ENCODE measurements at regions of chr1 and their contacts with region 1.

Region 1: GRCh38 chr1:46547481-46548383 is 3.7 kb downstream of the KNCN start:
- DNase-seq: peak in 2 of 5 donors; percentile 22 to 48
- ATAC-seq: peak in 2 of 4 donors; percentile 26 to 44
- H3K4me3 ChIP-seq: no peak overlapping the region
- H3K27ac ChIP-seq: no peak overlapping the region
- H3K4me1 ChIP-seq: peaks cover 0 to 8% (median 0%) of the 10 kb centered on the region in 12 donors
- H3K27me3 ChIP-seq: peaks cover 11 to 64% (median 30%) of the 10 kb centered on the region in 9 donors
- CTCF ChIP-seq: peak; percentile 21 to 51 (median 36)
- POLR2A ChIP-seq: no peak

Region 2: DNA sequence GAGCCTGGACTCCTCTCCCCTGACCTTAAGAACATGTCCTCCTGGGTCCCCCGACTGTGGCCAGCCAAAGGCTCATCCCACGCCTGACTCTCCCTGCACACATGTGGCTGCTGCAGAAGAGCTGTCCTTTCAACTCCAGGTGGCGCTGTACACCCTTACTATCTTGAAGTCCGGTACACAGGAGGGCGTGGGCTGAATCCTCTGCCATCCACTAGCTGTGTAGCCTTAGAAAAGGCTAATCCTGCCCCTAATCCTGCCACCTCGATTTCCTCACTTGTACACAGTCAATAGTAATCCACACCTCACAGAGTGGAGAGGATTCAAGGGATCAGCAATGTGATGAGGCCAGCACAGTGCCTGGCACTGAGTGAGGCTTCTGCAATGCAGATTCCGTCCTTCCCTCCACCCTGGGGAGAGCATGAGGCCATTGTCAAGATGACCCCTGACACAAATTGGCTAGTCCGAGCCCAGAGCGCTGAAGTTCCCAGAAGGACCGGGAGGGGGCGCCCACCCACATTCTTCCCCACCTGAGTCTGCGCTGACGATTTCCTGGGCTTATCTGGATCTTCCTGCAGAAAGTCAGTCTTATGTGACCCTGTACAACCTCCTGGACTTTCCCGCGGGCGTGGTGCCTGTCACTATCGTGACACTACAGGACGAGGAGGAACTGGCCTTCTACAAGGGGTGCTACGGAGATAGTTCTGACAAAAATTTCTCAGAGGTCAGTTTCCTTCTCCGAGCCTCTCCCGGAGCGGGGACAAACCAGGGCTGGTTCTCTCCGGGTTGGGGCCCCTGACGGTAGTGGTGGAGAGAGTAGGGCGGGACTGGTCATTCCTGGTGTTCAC is 105.2 kb before region 1 on chr1:
- intact Hi-C with region 1: loop called in 1 of 10 experiments (anchors 5 kb)
- DNase-seq: peak; percentile 54 to 82 (median 70)
- ATAC-seq: peak; percentile 67 to 79 (median 75)
- H3K4me3 ChIP-seq: peak overlapping the region in 10 of 12 donors; percentile 17 to 58 (median 46)
- H3K27ac ChIP-seq: peak overlapping the region in 1 of 12 donors; percentile 43
- H3K4me1 ChIP-seq: peaks cover 0 to 15% (median 0%) of the 10 kb centered on the region in 12 donors
- H3K27me3 ChIP-seq: peaks cover 0 to 19% (median 6%) of the 10 kb centered on the region in 9 donors
- CTCF ChIP-seq: peak; percentile 80 to 94 (median 90)
- POLR2A ChIP-seq: no peak

Region 3: DNA sequence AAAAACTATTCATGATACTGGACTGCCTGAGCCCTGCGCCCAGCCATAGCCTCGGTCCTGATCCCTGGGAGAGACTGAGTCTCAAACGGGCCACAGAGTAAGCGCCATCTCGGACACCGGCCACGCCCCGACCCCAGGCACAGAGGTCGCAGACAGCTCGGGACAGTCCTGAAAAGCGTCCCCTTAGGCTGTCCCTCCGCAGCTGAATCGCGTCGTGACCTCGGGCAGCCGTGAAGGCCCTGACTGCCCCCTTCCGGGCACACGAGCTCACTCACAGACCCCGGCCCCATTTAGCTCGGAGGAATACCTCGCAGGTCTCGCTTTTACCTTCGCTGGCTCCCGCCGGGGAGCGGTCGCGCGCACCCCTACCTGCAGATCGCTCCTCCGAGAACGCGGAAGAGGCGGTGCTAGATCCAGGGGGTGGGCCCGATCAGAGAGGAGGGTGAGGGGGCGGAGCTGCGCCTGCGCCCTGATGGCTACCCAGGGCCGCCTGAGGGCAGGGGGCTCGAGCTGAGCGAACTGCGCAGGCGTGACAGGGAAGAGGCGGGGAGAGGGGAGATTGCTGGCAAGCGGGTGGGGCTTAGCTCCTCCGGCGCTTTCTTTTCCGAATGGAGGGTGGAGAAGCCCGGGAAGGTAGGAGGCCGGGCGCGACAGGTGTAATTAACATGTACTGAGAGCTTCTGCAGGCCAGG is 56.3 kb after region 1 on chr1 and contains the start of gene MKNK1:
- intact Hi-C with region 1: loop called in 1 of 10 experiments (anchors 5 kb)
- DNase-seq: peak; percentile 97 to 99 (median 98)
- ATAC-seq: peak; percentile 96 to 99 (median 96)
- H3K4me3 ChIP-seq: peak within 1 kb of the TSS; percentile 66 to 99 (median 82)
- H3K27ac ChIP-seq: peak within 1 kb of the TSS; percentile 49 to 91 (median 80)
- H3K4me1 ChIP-seq: peaks cover 0 to 79% (median 56%) of the 10 kb centered on the region in 12 donors
- H3K27me3 ChIP-seq: no peaks in the 10 kb centered on the region
- CTCF ChIP-seq: peak in 7 of 12 donors; percentile 10 to 45 (median 30)
- POLR2A ChIP-seq: peak; percentile 34 to 96
- total RNA-seq, gene MKNK1: 23.1 to 77.6 (median 37.8) TPM

Region 4: DNA sequence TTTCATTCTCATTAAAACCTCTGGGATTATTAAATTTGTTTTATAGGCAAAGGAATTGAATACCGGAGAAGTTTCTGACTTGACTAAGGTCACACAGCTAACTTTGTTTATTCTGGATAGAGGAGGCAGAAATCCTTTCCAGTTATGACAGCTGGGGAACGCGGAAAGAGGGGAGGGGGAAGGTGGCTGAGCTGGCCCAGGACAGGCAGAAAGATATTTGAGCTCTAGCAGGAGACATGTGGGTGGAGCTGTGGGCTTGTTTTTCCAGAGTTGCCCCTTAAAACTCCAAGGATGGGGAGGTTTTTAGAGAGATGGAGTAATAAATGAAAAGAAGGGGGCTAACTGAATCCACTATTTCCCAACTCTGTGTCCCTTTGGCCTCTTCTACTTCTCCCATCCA is 917.9 kb after region 1 on chr1:
- intact Hi-C with region 1: no loop called
- DNase-seq: peak in 1 of 5 donors; percentile 13
- ATAC-seq: no peak
- H3K4me3 ChIP-seq: no peak overlapping the region
- H3K27ac ChIP-seq: no peak overlapping the region
- H3K4me1 ChIP-seq: peaks cover 0 to 5% (median 0%) of the 10 kb centered on the region in 12 donors
- H3K27me3 ChIP-seq: peaks cover 0 to 78% (median 19%) of the 10 kb centered on the region in 9 donors
- CTCF ChIP-seq: no peak
- POLR2A ChIP-seq: no peak

Measured in heart left ventricle (tissue), 16 donors.